ENCODE measurements at regions of chr9 and their contacts with region 1.

Region 1: DNA sequence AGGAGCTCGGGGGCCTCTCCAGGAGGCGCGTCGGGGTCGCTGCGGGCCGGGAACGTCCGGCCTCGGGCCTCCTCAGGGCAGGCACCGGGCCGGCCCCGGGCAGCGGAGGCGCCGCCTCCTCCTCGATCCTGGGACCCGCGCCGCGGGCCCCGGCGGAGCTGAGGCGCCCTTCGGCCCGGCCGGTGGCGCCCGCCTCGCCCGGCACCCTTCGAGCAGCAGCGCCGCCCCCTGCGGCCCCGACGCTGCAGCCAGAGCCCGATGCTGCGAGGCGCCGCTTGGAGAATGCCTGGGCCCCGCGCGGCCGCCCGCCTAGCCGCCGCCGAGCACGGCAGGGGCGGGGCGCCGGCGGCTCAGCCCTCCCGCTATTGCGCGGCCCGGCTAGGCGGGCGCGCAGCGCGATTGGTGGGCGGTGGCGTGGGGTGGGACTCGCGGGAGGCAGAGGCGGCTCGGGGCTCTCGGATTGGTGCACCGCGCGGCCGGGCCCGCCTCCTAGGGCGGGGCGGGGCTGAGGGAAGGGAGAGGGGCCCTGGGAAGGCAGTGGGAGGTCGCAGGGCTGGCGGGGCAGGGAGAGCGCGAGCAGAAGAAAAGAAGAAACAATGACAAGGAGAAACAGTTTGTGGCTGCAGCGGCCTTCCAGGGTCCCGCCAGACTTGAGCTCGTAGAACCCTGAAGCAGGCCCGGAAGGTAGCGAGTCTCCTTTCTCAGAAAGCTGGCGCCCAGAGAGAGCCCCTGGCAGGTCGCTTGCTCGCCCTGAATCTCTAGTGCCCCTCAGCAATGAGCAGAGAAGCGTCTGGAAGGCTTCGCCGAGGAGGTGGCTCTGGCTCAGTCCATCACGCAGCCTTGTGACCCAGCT is at the start of gene EEIG1:
- DNase-seq: peak; percentile 98
- H3K4me3 Mint-ChIP-seq: peak within 1 kb of the TSS; percentile 98
- H3K27ac Mint-ChIP-seq: peak within 1 kb of the TSS; percentile 98
- H3K4me1 Mint-ChIP-seq: peaks cover 44% of the 10 kb centered on the region
- H3K27me3 Mint-ChIP-seq: no peaks in the 10 kb centered on the region
- total RNA-seq, gene EEIG1: 61.0 to 70.8 TPM

Region 2: DNA sequence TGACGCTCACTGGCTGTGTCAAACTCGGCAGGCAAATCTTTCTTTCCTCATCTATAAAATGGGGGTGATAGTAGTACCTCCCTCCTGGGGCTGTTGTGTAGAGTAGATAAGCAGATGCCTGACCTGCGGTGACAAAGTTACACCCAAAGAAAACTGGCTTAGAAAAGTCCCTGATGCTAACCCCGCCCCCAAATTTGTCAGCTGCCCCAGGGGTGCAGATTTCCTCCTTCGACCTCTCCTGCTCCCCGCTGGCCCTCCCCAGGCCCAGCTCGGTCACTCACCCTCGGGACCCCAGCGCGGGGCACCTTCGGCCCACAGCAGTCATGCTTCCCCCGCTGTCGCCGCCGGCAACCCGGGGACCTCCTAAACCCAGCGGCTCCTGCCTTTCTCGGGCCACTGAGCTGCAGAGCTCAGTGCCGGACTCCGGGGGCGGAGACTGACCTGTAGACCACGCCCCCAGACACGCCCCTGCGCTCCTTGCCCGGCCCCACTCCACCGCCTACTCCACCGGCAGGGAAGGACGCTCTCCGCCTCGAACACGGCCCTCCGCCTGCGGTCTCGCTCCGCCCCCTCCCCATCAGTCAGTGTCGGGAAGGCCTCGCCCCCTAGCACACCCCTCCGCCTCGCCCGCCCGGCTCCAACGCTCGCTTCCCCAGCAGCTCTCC is 209.9 kb before region 1 on chr9:
- CTCF ChIA-PET with region 1: no interaction called
- intact Hi-C with region 1: loop called (anchors 5 kb)
- DNase-seq: peak; percentile 99
- H3K4me3 Mint-ChIP-seq: peak overlapping the region; percentile 90
- H3K27ac Mint-ChIP-seq: peak overlapping the region; percentile 91
- H3K4me1 Mint-ChIP-seq: peaks cover 62% of the 10 kb centered on the region
- H3K27me3 Mint-ChIP-seq: no peaks in the 10 kb centered on the region

Region 3: DNA sequence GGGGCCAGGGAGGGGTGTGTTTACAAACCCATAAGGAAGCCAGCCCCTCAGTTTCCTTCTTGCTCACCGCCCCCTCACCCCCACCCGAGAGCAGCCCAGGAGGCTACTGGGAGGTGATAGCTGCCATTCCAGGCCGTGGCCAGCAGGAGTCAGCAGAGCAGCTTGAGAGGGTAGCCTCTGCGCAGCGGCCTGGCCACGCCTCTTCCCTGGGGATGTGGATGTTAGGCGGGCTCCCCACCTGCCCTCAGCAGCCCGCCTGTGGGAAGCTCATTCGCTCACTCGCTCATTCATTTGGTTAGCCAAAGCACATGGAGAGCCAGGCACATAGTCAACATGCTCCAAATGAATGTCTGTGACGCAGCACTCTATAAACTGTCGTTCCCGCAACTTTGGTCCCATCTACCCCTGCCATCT is 37.2 kb before region 1 on chr9:
- CTCF ChIA-PET with region 1: interaction called, 75 read pairs
- intact Hi-C with region 1: loop called (anchors 5 kb)
- DNase-seq: peak; percentile 89
- H3K4me3 Mint-ChIP-seq: no peak overlapping the region
- H3K27ac Mint-ChIP-seq: peak overlapping the region; percentile 82
- H3K4me1 Mint-ChIP-seq: peaks cover 37% of the 10 kb centered on the region
- H3K27me3 Mint-ChIP-seq: no peaks in the 10 kb centered on the region

Region 4: GRCh38 chr9:127970401-127971313 is 10.3 kb before region 1 on chr9:
- CTCF ChIA-PET with region 1: interaction called, 3 read pairs
- intact Hi-C with region 1: loop called (anchors 1 kb)
- DNase-seq: peak; percentile 93
- H3K4me3 Mint-ChIP-seq: peak overlapping the region; percentile 72
- H3K27ac Mint-ChIP-seq: peak overlapping the region; percentile 99
- H3K4me1 Mint-ChIP-seq: peaks cover 96% of the 10 kb centered on the region
- H3K27me3 Mint-ChIP-seq: no peaks in the 10 kb centered on the region

Region 5: GRCh38 chr9:128026773-128027541 is 46.0 kb after region 1 on chr9:
- CTCF ChIA-PET with region 1: interaction called, 142 read pairs
- intact Hi-C with region 1: loop called (anchors 1 kb)
- DNase-seq: peak; percentile 80
- H3K4me3 Mint-ChIP-seq: peak overlapping the region; percentile 80
- H3K27ac Mint-ChIP-seq: peak overlapping the region; percentile 98
- H3K4me1 Mint-ChIP-seq: peaks cover 90% of the 10 kb centered on the region
- H3K27me3 Mint-ChIP-seq: no peaks in the 10 kb centered on the region